MCF 10A (cell line): ENCODE measurements at regions of chr5 and their contacts with region 1.

Region 1: GRCh38 chr5:179623003-179623880 is at the start of gene HNRNPH1:
- DNase-seq: peak; percentile 100
- H3K4me3 Mint-ChIP-seq: peak within 1 kb of the TSS; percentile 98
- H3K27ac Mint-ChIP-seq: peak within 1 kb of the TSS; percentile 99
- H3K4me1 Mint-ChIP-seq: peaks cover 46% of the 10 kb centered on the region
- H3K27me3 Mint-ChIP-seq: no peaks in the 10 kb centered on the region
- CTCF ChIP-seq: no peak
- total RNA-seq, gene HNRNPH1: 907 and 981 TPM in 2 replicates

Region 2: GRCh38 chr5:179550511-179551230 is 72.6 kb before region 1 on chr5 and contains the start of gene RUFY1:
- CTCF ChIA-PET with region 1: no interaction called
- POLR2A ChIA-PET with region 1: interaction called, 10 read pairs
- intact Hi-C with region 1: no loop called
- DNase-seq: peak; percentile 79
- H3K4me3 Mint-ChIP-seq: peak within 1 kb of the TSS; percentile 89
- H3K27ac Mint-ChIP-seq: peak within 1 kb of the TSS; percentile 93
- H3K4me1 Mint-ChIP-seq: peaks cover 18% of the 10 kb centered on the region
- H3K27me3 Mint-ChIP-seq: no peaks in the 10 kb centered on the region
- CTCF ChIP-seq: no peak
- total RNA-seq, gene RUFY1: 64.7 and 77.0 TPM in 2 replicates

Region 3: DNA sequence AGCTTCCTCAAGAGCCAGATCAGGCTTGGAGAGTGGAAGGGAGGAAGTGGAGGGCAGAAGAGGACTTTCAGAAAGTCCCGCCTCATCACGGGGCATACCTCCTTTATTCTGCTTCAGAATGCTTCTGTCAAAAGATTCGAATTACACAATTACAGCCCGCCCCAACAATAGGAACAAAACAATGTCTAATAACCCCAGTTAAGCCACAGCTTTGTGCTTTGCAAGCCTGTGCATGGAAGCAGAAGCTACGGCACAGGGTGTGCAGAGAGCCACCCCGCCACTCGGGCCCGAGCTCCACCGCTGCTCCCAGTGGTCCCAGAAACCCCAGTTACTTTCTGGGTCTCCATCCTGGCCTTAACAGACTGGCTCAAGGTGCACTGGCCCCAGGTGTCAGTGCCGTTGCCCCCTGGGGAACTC is 23.3 kb before region 1 on chr5:
- CTCF ChIA-PET with region 1: interaction called, 5 read pairs
- POLR2A ChIA-PET with region 1: interaction called, 197 read pairs
- intact Hi-C with region 1: no loop called
- DNase-seq: no peak
- H3K4me3 Mint-ChIP-seq: no peak overlapping the region
- H3K27ac Mint-ChIP-seq: no peak overlapping the region
- H3K4me1 Mint-ChIP-seq: no peaks in the 10 kb centered on the region
- H3K27me3 Mint-ChIP-seq: no peaks in the 10 kb centered on the region
- CTCF ChIP-seq: no peak

Region 4: DNA sequence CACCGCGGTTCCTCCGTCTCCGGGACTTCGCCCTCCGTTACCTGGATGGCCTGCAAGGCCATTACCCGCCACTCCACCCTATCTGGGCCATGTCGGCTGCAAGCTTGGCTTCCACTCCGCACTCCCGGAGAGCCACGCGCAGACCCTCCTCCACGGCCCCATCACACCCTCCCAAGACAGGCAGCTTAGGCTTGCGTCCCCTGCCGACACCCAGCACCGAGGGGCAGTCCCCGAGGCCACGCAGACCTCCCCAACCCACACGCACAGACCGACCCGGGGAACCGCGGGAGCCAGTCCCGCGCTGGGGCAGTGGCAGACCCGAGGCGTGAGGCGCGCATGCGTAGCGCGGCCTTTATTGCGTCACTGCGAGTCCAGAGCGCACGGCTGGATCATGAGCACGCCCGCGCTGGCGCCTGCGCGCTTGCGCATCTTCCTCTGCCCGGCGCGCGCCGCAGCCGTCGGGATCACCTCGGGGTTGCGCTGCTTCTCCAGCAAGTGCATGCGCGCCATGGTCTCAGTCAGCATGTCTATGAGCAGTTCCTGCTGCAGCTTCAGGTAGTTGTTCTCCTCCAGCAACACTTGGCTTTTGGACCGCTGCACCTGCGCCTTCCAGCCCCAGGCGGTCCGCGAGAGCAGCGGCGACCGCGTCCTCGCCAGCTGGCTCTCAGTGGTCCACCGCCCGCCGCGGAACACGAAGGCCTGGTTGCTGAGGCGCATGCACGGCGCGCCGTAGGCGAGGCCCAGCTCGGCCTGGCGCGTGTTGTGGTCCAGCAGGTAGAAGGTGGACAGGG is 55.2 kb after region 1 on chr5:
- CTCF ChIA-PET with region 1: no interaction called
- POLR2A ChIA-PET with region 1: interaction called, 31 read pairs
- intact Hi-C with region 1: no loop called
- DNase-seq: peak; percentile 97
- H3K4me3 Mint-ChIP-seq: peak overlapping the region; percentile 99
- H3K27ac Mint-ChIP-seq: peak overlapping the region; percentile 95
- H3K4me1 Mint-ChIP-seq: peaks cover 18% of the 10 kb centered on the region
- H3K27me3 Mint-ChIP-seq: no peaks in the 10 kb centered on the region
- CTCF ChIP-seq: no peak

Region 5: DNA sequence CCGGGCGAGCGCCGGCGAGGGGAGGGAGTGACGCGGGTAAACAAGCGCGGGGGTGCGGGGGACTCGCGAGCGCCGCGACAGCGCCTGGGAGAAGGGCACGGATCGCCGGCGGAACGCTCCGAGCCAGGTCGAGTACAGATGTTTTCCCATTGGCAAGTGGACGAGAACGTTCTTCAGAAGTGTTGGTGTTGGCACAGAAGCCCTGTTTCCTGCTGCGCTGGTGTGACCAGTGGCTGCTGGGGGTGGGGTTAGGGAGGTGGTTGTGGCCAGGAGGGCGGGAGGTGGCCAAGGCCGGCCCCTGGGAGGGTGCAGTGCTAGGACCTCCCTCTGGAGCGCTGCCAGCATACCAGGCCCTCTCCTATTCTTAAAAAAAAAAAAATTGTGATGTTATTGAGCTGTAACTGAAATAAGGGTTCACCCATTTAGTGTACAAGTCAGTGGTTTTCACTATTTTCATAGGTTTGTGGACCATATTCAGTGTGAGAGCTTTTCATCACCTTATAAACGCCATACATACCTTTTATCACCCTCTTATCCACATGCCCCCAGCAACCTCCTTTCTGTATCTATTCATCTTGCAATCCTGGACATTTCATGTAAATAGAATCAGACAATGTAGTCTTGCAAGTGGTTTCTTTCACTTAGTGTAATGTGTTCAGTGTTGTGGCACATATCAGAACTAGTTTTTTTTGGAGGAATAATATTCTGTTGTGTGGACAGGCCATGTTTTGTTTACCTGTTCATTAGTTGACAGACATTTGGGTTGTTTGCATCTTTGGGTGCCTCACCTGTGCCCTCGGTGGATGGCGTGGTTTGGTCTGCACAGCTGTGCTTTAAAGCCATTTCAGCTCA is 198.6 kb after region 1 on chr5:
- CTCF ChIA-PET with region 1: no interaction called
- POLR2A ChIA-PET with region 1: interaction called, 29 read pairs
- intact Hi-C with region 1: no loop called
- DNase-seq: peak; percentile 99
- H3K4me3 Mint-ChIP-seq: peak overlapping the region; percentile 94
- H3K27ac Mint-ChIP-seq: peak overlapping the region; percentile 95
- H3K4me1 Mint-ChIP-seq: peaks cover 48% of the 10 kb centered on the region
- H3K27me3 Mint-ChIP-seq: no peaks in the 10 kb centered on the region
- CTCF ChIP-seq: no peak